ENCODE measurements at regions of chr4 and their contacts with region 1.

Region 1: DNA sequence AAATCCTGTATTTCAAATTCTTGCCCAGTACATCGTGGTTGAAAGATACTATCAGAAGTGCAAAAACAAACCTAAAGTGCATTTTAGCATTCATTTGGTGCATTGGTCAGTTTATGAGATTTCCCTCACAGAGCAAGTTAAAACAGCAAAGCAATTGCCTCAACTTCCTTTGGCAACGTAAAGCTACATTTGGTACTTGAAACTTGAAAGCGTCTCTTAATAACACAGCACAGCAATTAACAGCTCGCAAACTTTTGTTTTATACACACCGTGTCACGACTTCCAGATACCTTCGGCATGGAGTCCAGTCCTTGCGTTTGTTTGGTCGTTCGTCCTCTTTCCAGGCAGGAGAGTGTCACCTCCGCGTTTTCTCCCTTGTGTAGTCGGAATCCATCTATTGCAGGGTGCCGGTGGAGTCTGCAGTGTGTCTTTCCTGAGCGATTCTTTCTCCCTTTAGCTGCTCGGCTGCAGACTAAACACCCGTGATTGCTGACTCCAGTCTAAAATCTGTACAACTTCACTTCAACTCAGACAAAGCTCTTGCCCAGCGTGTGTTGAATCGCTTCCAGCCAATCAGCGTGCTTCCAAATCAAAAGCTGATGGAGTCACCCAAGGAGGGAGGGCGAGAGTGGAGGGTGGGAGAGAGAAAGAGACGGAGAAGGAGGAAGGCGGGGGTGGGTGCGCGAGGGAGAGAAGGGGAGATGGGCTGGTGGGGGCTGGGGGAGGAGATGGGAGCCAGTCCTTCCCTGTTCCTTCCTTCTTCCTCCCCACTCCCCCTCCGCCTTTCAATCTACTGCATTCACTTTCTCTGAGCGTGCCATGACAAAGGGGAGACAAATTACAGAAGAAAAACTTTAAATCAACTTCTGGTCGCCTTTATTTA is at the start of gene PCDH18:
- DNase-seq: peak; percentile 98
- ATAC-seq: peak; percentile 83
- H3K4me3 ChIP-seq: peak within 1 kb of the TSS; percentile 62
- H3K27ac ChIP-seq: peak within 1 kb of the TSS; percentile 87
- H3K4me1 ChIP-seq: no peaks in the 10 kb centered on the region; the same call in 1 of the 2 replicates
- H3K27me3 ChIP-seq: no peaks in the 10 kb centered on the region
- CTCF ChIP-seq: no peak
- POLR2A ChIP-seq: peak; percentile 79
- RAD21 ChIP-seq: no peak; the same call in 1 of the 2 replicates
- total RNA-seq, gene PCDH18: 108 and 119 TPM in 2 replicates

Region 2: GRCh38 chr4:137283737-137284136 is 248.5 kb before region 1 on chr4:
- CTCF ChIA-PET with region 1: no interaction called
- POLR2A ChIA-PET with region 1: no interaction called
- dilution Hi-C with region 1: no loop called
- in situ Hi-C with region 1: no loop called
- intact Hi-C with region 1: loop called (anchors 2 kb)
- DNase-seq: peak; percentile 39
- ATAC-seq: peak; percentile 63; the same call in 1 of the 2 replicates
- H3K4me3 ChIP-seq: no peak overlapping the region
- H3K27ac ChIP-seq: no peak overlapping the region
- H3K4me1 ChIP-seq: no peaks in the 10 kb centered on the region
- H3K27me3 ChIP-seq: no peaks in the 10 kb centered on the region
- CTCF ChIP-seq: peak; percentile 56
- POLR2A ChIP-seq: no peak
- RAD21 ChIP-seq: peak; percentile 55

Region 3: GRCh38 chr4:137664046-137664387 is 131.8 kb after region 1 on chr4:
- CTCF ChIA-PET with region 1: interaction called, 3 read pairs
- POLR2A ChIA-PET with region 1: interaction called, 5 read pairs
- dilution Hi-C with region 1: no loop called
- in situ Hi-C with region 1: loop called (anchors 10 kb)
- intact Hi-C with region 1: loop called (anchors 1 kb)
- DNase-seq: peak; percentile 85
- ATAC-seq: peak; percentile 76
- H3K4me3 ChIP-seq: no peak overlapping the region; the same call in 1 of the 2 replicates
- H3K27ac ChIP-seq: peak overlapping the region; percentile 98; the same call in 1 of the 2 replicates
- H3K4me1 ChIP-seq: peaks cover 18% of the 10 kb centered on the region
- H3K27me3 ChIP-seq: no peaks in the 10 kb centered on the region
- CTCF ChIP-seq: no peak
- POLR2A ChIP-seq: no peak
- RAD21 ChIP-seq: no peak

Region 4: GRCh38 chr4:137861682-137862081 is 329.5 kb after region 1 on chr4:
- CTCF ChIA-PET with region 1: interaction called, 4 read pairs
- POLR2A ChIA-PET with region 1: no interaction called
- dilution Hi-C with region 1: no loop called
- in situ Hi-C with region 1: no loop called
- intact Hi-C with region 1: loop called (anchors 1 kb)
- DNase-seq: peak; percentile 29
- ATAC-seq: 0 out of 2 replicates have a peak, but pooled peaks have one; percentile 37
- H3K4me3 ChIP-seq: no peak overlapping the region
- H3K27ac ChIP-seq: no peak overlapping the region
- H3K4me1 ChIP-seq: peaks cover 4% of the 10 kb centered on the region
- H3K27me3 ChIP-seq: no peaks in the 10 kb centered on the region
- CTCF ChIP-seq: peak; percentile 62
- POLR2A ChIP-seq: no peak
- RAD21 ChIP-seq: peak; percentile 61

Region 5: GRCh38 chr4:138174981-138175794 is 643.0 kb after region 1 on chr4:
- CTCF ChIA-PET with region 1: no interaction called
- POLR2A ChIA-PET with region 1: no interaction called
- dilution Hi-C with region 1: no loop called
- in situ Hi-C with region 1: loop called (anchors 25 kb)
- intact Hi-C with region 1: loop called (anchors 5 kb)
- DNase-seq: peak; percentile 61
- ATAC-seq: peak; percentile 67
- H3K4me3 ChIP-seq: no peak overlapping the region
- H3K27ac ChIP-seq: peak overlapping the region; percentile 2; the same call in 1 of the 2 replicates
- H3K4me1 ChIP-seq: peaks cover 3% of the 10 kb centered on the region
- H3K27me3 ChIP-seq: no peaks in the 10 kb centered on the region
- CTCF ChIP-seq: peak; percentile 40
- POLR2A ChIP-seq: no peak
- RAD21 ChIP-seq: peak; percentile 36

Region 6: DNA sequence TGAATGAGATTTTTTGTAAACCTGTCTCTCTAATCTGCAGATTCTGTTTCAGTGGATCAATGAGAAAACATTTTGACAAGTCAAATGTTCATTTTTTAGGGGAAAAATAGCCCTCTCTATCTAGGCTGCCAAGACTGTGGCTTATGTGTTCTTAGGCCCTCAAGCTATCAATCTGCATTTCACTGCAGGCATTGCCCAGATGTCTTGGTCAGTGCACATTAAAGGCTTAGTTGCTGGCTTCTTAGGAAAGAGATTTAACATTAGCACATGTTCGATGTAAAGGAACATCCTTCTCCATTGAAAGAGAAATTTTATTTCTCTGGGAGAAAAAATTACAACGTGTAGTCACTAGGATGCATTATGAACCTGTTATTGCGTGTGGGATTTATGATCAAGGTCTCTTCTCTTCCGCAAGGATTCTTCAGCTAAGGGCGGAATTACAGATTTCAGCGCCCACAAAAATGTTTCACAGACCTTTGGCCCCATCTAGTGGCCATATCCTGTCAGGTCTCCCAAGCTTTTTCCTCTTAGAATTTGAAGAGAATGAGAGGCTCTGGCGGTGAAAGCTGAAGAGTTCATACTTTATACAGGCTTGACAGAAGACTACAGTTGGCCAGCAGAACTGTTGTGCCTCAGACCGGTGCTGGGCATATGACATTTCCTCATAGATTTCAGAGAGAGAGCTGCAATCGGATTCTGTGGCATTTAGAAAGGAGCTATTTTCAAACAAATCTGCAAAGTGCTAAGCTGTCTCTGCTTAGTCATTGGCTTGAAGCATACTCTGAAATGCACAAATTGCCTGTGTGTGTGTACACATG is 1338.7 kb after region 1 on chr4:
- CTCF ChIA-PET with region 1: interaction called, 4 read pairs
- POLR2A ChIA-PET with region 1: no interaction called
- dilution Hi-C with region 1: no loop called
- in situ Hi-C with region 1: no loop called
- intact Hi-C with region 1: loop called (anchors 2 kb)
- DNase-seq: peak; percentile 78
- ATAC-seq: peak; percentile 63
- H3K4me3 ChIP-seq: no peak overlapping the region
- H3K27ac ChIP-seq: no peak overlapping the region
- H3K4me1 ChIP-seq: peaks cover 14% of the 10 kb centered on the region
- H3K27me3 ChIP-seq: peaks cover 6% of the 10 kb centered on the region; the same call in 1 of the 2 replicates
- CTCF ChIP-seq: peak; percentile 87
- POLR2A ChIP-seq: no peak
- RAD21 ChIP-seq: peak; percentile 88

Measured in IMR-90 (cell line).